Mucosa of descending colon (tissue), 3 donors: ENCODE measurements at regions of chr17 and their contacts with region 1.

Region 1: DNA sequence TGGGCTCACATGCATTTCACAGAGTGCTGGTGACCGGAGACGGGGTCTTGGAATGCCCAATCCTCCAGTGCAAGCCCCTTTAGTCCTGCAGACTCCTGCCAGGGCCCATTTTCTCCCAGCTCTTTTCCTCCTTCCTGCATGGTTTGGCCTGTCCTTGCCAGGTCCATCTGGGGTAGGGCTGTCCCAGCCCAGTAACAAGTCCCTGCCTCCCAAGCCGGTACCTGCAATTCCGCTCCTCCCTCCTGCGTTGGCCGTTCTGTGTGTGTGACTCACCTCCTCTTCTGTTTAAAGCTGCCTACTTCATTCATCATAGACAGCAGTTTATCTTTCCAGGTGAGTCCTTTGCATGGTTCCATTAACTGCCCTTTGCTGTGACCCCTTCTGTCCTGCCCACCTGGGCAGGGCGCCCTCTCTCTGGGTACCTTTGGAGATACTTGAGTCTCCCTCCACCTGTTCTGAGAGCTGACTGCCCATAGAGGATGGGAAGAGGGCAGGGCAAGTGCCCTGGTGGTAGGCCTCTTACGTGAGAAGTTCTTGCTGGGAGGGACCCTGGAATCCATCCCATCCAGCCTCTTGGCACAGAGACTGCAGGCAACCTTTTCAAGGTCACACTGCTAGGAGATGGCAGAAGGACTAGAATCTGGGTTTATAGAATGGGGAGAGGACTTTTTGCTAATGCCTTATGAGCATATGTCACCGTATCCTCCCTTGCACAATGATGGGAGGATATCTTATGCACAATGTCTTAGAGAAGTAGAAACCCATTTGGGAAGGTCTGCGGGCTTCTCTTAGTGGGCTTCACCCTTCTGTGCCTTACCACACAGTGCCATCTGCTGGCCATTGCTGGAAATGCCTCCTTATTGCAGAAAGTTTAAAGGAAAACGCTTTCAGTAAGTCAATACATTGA is 29.7 kb upstream of the LGALS9 start:
- DNase-seq: peak; percentile 62 to 95 (median 76)
- ATAC-seq: peak; percentile 77
- H3K4me3 ChIP-seq: no peak overlapping the region
- H3K4me1 ChIP-seq: peaks cover 8% of the 10 kb centered on the region
- CTCF ChIP-seq: peak; percentile 79

Region 2: GRCh38 chr17:27236717-27237315 is 364.5 kb before region 1 on chr17:
- intact Hi-C with region 1: loop called (anchors 10 kb)
- DNase-seq: peak in 1 of 3 donors; percentile 97
- ATAC-seq: peak; percentile 90
- H3K4me3 ChIP-seq: no peak overlapping the region
- H3K4me1 ChIP-seq: peaks cover 10% of the 10 kb centered on the region
- CTCF ChIP-seq: peak; percentile 92

Region 3: DNA sequence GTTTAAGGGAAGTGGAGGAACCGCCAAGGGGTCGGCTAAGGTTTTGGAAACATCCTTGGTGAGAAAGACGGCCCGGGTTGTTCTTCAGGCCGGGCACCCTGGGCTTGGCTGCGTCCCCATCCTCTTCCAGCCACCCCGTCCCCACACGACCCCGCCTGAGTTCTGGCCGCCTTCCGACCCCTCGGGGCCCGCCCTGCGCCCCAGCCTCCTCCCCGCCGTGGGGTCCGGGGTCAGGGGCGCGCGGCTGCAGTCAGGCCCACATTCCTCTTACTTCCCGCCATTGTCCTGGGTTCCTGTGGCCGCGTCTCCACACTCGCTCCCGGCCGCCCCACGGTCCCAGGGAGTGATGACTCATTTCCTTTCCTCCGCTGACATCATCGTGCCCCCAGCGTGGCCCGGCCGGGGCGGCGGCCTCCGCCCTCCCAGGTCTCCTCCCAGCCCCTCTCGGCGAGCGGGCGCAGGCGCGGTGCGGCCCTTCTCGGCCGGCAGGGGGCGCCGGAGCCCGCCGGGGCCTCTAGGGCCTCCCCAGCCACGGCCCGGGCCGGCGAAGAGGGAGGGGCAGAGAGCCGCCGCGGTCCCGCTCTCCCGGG is 247.8 kb before region 1 on chr17:
- intact Hi-C with region 1: loop called (anchors 5 kb)
- DNase-seq: peak; percentile 86 to 94 (median 94)
- ATAC-seq: peak; percentile 96
- H3K4me3 ChIP-seq: peak overlapping the region; percentile 20
- H3K4me1 ChIP-seq: peaks cover 12% of the 10 kb centered on the region
- CTCF ChIP-seq: peak; percentile 95

Region 4: GRCh38 chr17:27455914-27456680 is 145.2 kb before region 1 on chr17 and contains the start of gene KSR1:
- intact Hi-C with region 1: loop called in 1 of 2 experiments (anchors 10 kb)
- DNase-seq: peak; percentile 81 to 91 (median 87)
- ATAC-seq: peak; percentile 97
- H3K4me3 ChIP-seq: peak within 1 kb of the TSS; percentile 40
- H3K4me1 ChIP-seq: peaks cover 9% of the 10 kb centered on the region
- CTCF ChIP-seq: no peak
- total RNA-seq, gene KSR1: 20.5 to 50.4 (median 21.3) TPM

Region 5: DNA sequence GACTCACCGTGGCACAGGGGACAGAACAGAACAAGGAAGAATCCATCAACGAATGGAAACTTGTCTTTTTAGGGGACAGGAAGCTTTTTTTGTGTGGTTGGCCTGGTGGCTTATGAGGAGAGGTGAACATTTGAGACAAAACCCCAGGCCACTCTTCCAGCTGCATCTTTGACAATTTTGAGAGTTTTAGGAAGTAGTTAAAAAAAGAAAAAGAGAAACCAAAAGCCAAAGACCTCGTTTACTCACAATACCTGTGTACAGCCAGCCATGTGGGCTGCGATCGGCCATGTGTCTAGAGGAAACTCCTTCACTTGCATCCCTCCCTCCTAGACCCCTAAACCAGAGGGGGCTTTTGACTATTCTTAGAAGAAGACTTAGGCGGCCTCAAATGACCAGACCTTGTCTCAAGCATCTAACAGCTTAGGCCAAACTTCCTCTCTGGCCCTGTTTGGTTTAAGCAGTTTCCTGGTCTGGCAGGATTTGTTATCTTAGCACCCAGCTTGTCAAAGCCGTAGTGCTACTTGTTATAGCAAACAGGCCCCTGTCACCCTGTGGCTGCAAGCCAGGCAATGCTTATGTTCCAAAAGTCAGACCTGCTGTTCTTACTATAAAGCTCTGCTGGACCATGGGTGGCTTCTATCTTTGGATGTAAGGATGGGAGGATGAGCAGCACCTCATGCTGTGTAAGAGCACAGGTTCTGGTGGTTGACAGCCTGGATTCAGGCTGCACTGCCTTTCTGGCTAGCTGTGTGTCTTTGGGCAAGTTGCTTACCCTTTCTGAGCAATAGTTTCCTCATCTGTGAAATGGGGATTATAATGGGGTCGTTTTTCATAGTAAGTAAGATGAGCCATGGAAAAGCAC is 127.3 kb before region 1 on chr17:
- intact Hi-C with region 1: loop called in 1 of 2 experiments (anchors 10 kb)
- DNase-seq: peak in 1 of 3 donors; percentile 38
- ATAC-seq: peak; percentile 56
- H3K4me3 ChIP-seq: no peak overlapping the region
- H3K4me1 ChIP-seq: peaks cover 7% of the 10 kb centered on the region
- CTCF ChIP-seq: no peak

Region 6: GRCh38 chr17:27494192-27495091 is 106.9 kb before region 1 on chr17:
- intact Hi-C with region 1: loop called in 1 of 2 experiments (anchors 2 kb)
- DNase-seq: peak; percentile 87 to 90 (median 88)
- ATAC-seq: peak; percentile 99
- H3K4me3 ChIP-seq: no peak overlapping the region
- H3K4me1 ChIP-seq: peaks cover 3% of the 10 kb centered on the region
- CTCF ChIP-seq: no peak

Region 7: GRCh38 chr17:27654654-27655524 is 53.6 kb after region 1 on chr17:
- intact Hi-C with region 1: loop called (anchors 5 kb)
- DNase-seq: peak; percentile 80 to 85 (median 83)
- ATAC-seq: peak; percentile 83
- H3K4me3 ChIP-seq: no peak overlapping the region
- H3K4me1 ChIP-seq: no peaks in the 10 kb centered on the region
- CTCF ChIP-seq: peak; percentile 82